Spleen (tissue), 13 donors: ENCODE measurements at regions of chr2 and their contacts with region 1.

Region 1: DNA sequence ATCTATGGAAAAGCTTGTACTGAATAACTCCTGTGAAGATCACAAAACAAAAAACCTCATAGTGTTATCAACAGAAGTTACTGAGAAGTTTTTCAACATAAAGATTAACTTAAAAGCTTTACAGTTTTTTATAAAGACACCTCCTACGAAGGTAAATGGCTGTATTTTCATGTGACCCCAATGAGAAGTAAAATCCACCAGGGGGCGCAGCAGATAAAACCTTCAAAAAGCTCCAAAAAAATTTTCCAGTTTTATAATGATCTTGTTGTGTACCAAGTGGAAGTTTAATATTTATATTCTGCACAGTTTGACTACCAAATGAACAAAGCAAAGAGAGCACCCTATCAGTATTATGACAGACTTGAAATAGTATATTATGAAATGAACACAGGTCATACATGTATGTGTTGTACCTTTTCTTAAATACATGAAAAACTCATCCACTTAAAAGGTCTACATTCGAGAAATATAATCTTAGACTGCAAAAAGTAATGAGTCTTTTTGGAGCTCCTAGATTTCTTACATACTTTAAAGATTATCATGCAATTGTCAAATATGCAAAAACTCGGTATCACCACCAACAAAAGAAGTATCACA is 38.5 kb downstream of the PNO1 start:
- DNase-seq: no peak
- H3K4me3 ChIP-seq: no peak overlapping the region
- H3K27ac ChIP-seq: peak overlapping the region in 1 of 8 donors; percentile 0
- H3K4me1 ChIP-seq: peaks cover 16 to 95% (median 58%) of the 10 kb centered on the region in 6 donors
- H3K27me3 ChIP-seq: no peaks in the 10 kb centered on the region
- CTCF ChIP-seq: peak in 9 of 11 experiments; percentile 17 to 83 (median 63)
- POLR2A ChIP-seq: no peak

Region 2: GRCh38 chr2:68244456-68244855 is 48.2 kb after region 1 on chr2:
- intact Hi-C with region 1: loop called (anchors 10 kb)
- DNase-seq: no peak
- H3K4me3 ChIP-seq: no peak overlapping the region
- H3K27ac ChIP-seq: peak overlapping the region in 1 of 8 donors; percentile 5
- H3K4me1 ChIP-seq: peaks cover 36 to 100% (median 98%) of the 10 kb centered on the region in 6 donors
- H3K27me3 ChIP-seq: no peaks in the 10 kb centered on the region
- CTCF ChIP-seq: no peak
- POLR2A ChIP-seq: no peak